OCI-LY7 (cell line): ENCODE measurements at regions of chr1 and their contacts with region 1.

Region 1: DNA sequence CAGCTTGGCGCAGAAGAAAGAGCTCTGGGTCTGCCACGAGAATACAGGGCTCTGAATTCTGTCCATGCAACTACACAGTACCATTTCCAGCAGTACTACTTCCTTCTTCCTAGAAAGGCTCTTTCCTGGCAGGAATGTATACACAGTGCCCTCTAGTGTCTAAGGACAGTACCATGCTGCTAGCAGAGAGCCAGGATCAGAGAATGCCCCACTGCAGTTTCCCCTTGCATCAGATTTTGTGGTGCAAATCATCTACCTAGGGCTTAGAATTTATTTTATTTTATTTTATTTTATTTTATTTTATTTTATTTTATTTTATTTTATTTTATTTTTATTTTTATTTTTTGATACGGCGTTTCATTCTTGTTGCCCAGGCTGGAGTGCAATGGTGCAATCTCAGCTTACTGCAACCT is 50.8 kb downstream of the PAX7 start:
- DNase-seq: peak; percentile 76
- H3K4me3 ChIP-seq: no peak overlapping the region
- H3K27ac ChIP-seq: no peak overlapping the region
- H3K4me1 ChIP-seq: peaks cover 3% of the 10 kb centered on the region
- CTCF ChIP-seq: peak; percentile 87

Region 2: GRCh38 chr1:18608534-18608933 is 72.9 kb before region 1 on chr1:
- CTCF ChIA-PET with region 1: no interaction called
- POLR2A ChIA-PET with region 1: no interaction called
- intact Hi-C with region 1: loop called (anchors 2 kb)
- DNase-seq: peak; percentile 37
- H3K4me3 ChIP-seq: no peak overlapping the region
- H3K27ac ChIP-seq: no peak overlapping the region
- H3K4me1 ChIP-seq: no peaks in the 10 kb centered on the region
- CTCF ChIP-seq: peak; percentile 77